CD8-positive, alpha-beta memory T cell (primary cell): ENCODE measurements at regions of chr4 and their contacts with region 1.

Region 1: GRCh38 chr4:1604711-1605205 is 79.4 kb downstream of the FAM53A start:
- DNase-seq: peak in 3 of 5 donors; percentile 56 to 80 (median 59)
- H3K4me3 ChIP-seq: peak overlapping the region; percentile 37
- H3K4me3 Mint-ChIP-seq: peak overlapping the region; percentile 52 to 88 (median 80)
- H3K27ac ChIP-seq: peak overlapping the region; percentile 31
- H3K27ac Mint-ChIP-seq: peak overlapping the region in 5 of 8 donors; percentile 39 to 90 (median 84)
- H3K4me1 ChIP-seq: peaks cover 26% of the 10 kb centered on the region
- H3K4me1 Mint-ChIP-seq: peaks cover 16 to 38% (median 23%) of the 10 kb centered on the region in 3 donors
- H3K27me3 ChIP-seq: no peaks in the 10 kb centered on the region
- H3K27me3 Mint-ChIP-seq: no peaks in the 10 kb centered on the region

Region 2: DNA sequence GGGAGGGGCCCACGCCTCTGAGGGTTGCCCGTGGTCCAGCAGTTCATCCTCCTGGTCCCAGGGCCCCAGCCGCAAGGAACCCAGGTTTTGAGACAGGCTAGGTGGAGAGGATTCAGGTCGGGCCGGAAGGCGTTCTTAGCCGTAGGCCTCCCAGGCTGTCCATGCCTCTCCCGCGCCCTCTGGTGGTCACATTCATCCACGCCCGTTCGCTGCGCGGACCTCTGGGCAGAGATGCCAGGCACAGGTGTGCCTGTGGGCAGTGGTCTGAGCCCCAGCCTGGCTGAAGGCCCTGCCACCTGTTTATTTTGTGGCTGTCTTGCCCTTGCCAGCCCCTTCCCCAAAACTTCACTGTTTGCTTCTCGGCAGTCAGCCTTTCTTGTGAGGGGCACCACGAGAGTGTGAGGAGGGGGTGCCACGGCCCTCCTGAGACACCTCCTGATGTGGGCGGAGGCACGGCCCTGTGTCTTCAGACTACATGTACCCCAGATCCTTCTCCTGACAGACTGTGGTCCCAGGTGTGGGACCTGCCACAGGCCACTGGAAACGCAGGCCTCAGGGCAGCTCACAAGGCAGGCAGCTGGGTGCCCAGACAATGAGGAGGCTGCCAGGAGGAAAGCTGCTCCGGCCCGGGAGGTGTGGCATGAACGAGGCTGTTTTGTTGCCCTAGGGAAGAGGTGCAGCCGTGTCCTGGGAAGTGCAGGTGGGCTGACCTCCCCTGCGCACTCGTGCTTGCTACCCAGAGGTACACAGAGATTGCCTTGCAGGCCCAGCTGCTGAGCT is 252.7 kb before region 1 on chr4:
- CTCF ChIA-PET with region 1: interaction called, 34 read pairs
- POLR2A ChIA-PET with region 1: interaction called, 5 read pairs
- DNase-seq: peak; percentile 77 to 89 (median 86)
- H3K4me3 ChIP-seq: no peak overlapping the region
- H3K4me3 Mint-ChIP-seq: peak overlapping the region in 1 of 7 donors; percentile 35
- H3K27ac ChIP-seq: no peak overlapping the region
- H3K27ac Mint-ChIP-seq: peak overlapping the region; percentile 55 to 97 (median 87)
- H3K4me1 ChIP-seq: peaks cover 20% of the 10 kb centered on the region
- H3K4me1 Mint-ChIP-seq: peaks cover 24 to 40% (median 28%) of the 10 kb centered on the region in 3 donors
- H3K27me3 ChIP-seq: no peaks in the 10 kb centered on the region
- H3K27me3 Mint-ChIP-seq: no peaks in the 10 kb centered on the region

Region 3: DNA sequence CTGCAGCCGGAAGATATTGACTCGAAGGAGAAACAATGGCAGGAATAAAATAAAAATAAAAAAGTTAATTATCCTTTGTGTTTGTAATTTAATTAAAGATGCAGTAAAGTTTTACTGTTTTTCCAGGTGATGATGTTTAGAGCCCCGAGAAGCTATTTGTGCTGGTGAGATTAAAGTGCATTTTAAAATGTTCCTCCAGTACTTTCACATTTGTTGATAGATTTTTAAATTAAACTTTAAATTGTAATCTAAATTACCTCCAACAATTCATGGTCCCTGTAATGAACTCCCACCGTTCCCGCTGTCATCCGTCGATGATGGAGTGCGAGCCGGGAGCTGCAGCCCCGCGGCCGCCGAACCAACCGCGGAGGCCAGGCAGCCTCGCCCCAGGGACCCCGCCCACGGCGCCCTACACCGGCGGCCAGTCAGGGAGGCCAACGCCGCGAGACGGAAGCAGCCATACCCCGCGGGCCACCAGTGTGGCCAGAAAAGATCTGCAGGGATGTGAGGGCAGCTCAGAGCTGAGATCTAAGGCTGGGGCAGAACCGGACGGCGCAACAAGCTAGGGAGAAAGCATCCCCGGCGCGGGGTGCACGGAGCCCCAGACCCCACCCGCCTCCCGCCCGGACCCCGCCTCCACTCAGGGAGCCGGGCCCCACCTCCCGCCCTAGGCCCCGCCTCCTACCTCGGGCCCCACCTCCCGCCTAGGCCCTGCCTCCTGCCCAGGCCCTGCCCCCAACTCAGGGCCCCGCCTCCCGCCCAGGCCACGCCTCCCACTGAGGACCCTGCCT is 24.7 kb before region 1 on chr4:
- CTCF ChIA-PET with region 1: interaction called, 12 read pairs
- POLR2A ChIA-PET with region 1: interaction called, 6 read pairs
- DNase-seq: peak; percentile 87 to 94 (median 90)
- H3K4me3 ChIP-seq: peak overlapping the region; percentile 78
- H3K4me3 Mint-ChIP-seq: peak overlapping the region; percentile 76 to 90 (median 78)
- H3K27ac ChIP-seq: peak overlapping the region; percentile 82
- H3K27ac Mint-ChIP-seq: peak overlapping the region in 6 of 8 donors; percentile 37 to 78 (median 62)
- H3K4me1 ChIP-seq: peaks cover 5% of the 10 kb centered on the region
- H3K4me1 Mint-ChIP-seq: peaks cover 4 to 9% (median 5%) of the 10 kb centered on the region in 3 donors
- H3K27me3 ChIP-seq: no peaks in the 10 kb centered on the region
- H3K27me3 Mint-ChIP-seq: no peaks in the 10 kb centered on the region

Region 4: GRCh38 chr4:1615786-1616556 is 11.2 kb after region 1 on chr4:
- CTCF ChIA-PET with region 1: interaction called, 10 read pairs
- POLR2A ChIA-PET with region 1: interaction called, 4 read pairs
- DNase-seq: peak in 1 of 5 donors; percentile 39
- H3K4me3 ChIP-seq: no peak overlapping the region
- H3K4me3 Mint-ChIP-seq: peak overlapping the region in 5 of 7 donors; percentile 6 to 62 (median 36)
- H3K27ac ChIP-seq: no peak overlapping the region
- H3K27ac Mint-ChIP-seq: peak overlapping the region in 6 of 8 donors; percentile 31 to 78 (median 51)
- H3K4me1 ChIP-seq: peaks cover 26% of the 10 kb centered on the region
- H3K4me1 Mint-ChIP-seq: peaks cover 32 to 45% (median 42%) of the 10 kb centered on the region in 3 donors
- H3K27me3 ChIP-seq: no peaks in the 10 kb centered on the region
- H3K27me3 Mint-ChIP-seq: peaks cover 0 to 2% of the 10 kb centered on the region in 2 donors

Region 5: DNA sequence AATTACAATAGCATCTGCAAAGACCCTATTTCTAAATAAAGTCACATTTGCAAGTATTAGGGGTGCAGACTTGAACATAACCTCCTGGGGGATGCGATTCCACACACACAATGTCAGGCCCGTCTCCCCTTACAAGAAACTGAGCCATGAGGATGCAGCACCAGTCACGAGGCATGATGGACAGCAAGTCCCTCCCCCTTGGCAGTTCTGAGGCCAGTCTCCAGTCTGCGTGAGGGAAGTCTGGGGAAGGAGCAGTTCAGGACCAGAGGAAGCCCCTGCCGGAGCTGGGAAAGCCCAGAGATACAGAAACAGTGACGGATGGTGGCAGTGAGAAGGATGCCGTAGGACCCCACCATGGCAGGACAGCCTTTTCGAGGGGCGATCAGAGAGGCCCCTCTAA is 69.9 kb after region 1 on chr4:
- CTCF ChIA-PET with region 1: no interaction called
- POLR2A ChIA-PET with region 1: no interaction called
- DNase-seq: no peak
- H3K4me3 ChIP-seq: no peak overlapping the region
- H3K4me3 Mint-ChIP-seq: no peak overlapping the region
- H3K27ac ChIP-seq: no peak overlapping the region
- H3K27ac Mint-ChIP-seq: no peak overlapping the region
- H3K4me1 ChIP-seq: no peaks in the 10 kb centered on the region
- H3K4me1 Mint-ChIP-seq: no peaks in the 10 kb centered on the region
- H3K27me3 ChIP-seq: no peaks in the 10 kb centered on the region
- H3K27me3 Mint-ChIP-seq: peaks cover 0 to 3% of the 10 kb centered on the region in 2 donors

Region 6: DNA sequence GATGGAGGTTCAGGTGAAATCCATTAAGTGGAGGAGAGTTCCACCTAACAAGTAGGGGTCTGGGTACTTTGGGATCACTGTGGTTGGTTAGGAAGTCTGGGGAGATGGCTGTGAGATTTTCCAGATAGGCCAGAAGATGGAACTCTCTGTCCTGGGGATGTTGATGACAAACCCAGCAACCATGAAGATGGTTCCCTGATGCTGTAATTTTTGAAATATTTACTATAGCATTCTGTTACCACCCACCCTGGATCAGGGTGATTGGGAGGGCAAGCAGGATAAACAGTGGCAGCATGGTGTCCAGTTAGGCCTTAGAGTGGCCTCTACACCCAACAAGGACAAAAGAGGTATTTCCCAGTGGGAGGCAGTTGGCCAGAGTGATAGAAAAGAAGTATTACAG is 419.9 kb after region 1 on chr4:
- CTCF ChIA-PET with region 1: no interaction called
- POLR2A ChIA-PET with region 1: no interaction called
- DNase-seq: no peak
- H3K4me3 ChIP-seq: no peak overlapping the region
- H3K4me3 Mint-ChIP-seq: no peak overlapping the region
- H3K27ac ChIP-seq: no peak overlapping the region
- H3K27ac Mint-ChIP-seq: no peak overlapping the region
- H3K4me1 ChIP-seq: no peaks in the 10 kb centered on the region
- H3K4me1 Mint-ChIP-seq: no peaks in the 10 kb centered on the region
- H3K27me3 ChIP-seq: no peaks in the 10 kb centered on the region
- H3K27me3 Mint-ChIP-seq: peaks cover 33 to 63% of the 10 kb centered on the region in 2 donors